ENCODE measurements at regions of chr16 and their contacts with region 1.

Region 1: DNA sequence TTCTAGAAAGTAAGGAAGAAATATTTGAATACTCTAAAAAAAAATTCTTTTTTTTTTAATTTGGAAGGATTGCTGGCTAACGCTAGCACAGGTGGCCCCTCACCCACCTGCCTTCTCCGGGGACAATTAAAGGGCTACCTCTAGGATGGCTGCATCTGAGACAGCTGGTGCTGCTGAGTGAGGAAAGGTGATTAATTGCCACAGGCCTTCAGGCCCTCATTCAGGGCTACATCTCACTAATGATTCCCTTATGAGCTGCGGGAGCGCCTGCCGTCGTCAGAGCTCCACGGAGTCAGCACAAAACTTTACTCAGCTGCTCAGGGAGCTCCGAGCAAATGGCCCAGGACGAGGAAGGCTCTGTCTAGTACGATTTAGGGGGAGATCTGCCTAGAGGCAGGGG is 27.0 kb upstream of the AKTIP start:
- DNase-seq: no peak
- CTCF ChIP-seq: no peak

Region 2: GRCh38 chr16:53518550-53519416 is 11.3 kb before region 1 on chr16:
- CTCF ChIA-PET with region 1: interaction called, 10 read pairs
- POLR2A ChIA-PET with region 1: no interaction called
- DNase-seq: peak; percentile 72
- CTCF ChIP-seq: no peak

Region 3: GRCh38 chr16:53651357-53651756 is 121.3 kb after region 1 on chr16:
- CTCF ChIA-PET with region 1: no interaction called
- POLR2A ChIA-PET with region 1: no interaction called
- DNase-seq: no peak
- CTCF ChIP-seq: no peak